Tibial artery (tissue), 4 donors: ENCODE measurements at regions of chr6 and their contacts with region 1.

Region 1: GRCh38 chr6:32763427-32763826 is at the start of gene HLA-DQB2:
- DNase-seq: no peak
- H3K4me3 ChIP-seq: no peak within 1 kb of the TSS
- H3K27ac ChIP-seq: no peak within 1 kb of the TSS
- H3K4me1 ChIP-seq: no peaks in the 10 kb centered on the region
- H3K27me3 ChIP-seq: peaks cover 0 to 25% of the 10 kb centered on the region in 2 donors
- CTCF ChIP-seq: no peak

Region 2: DNA sequence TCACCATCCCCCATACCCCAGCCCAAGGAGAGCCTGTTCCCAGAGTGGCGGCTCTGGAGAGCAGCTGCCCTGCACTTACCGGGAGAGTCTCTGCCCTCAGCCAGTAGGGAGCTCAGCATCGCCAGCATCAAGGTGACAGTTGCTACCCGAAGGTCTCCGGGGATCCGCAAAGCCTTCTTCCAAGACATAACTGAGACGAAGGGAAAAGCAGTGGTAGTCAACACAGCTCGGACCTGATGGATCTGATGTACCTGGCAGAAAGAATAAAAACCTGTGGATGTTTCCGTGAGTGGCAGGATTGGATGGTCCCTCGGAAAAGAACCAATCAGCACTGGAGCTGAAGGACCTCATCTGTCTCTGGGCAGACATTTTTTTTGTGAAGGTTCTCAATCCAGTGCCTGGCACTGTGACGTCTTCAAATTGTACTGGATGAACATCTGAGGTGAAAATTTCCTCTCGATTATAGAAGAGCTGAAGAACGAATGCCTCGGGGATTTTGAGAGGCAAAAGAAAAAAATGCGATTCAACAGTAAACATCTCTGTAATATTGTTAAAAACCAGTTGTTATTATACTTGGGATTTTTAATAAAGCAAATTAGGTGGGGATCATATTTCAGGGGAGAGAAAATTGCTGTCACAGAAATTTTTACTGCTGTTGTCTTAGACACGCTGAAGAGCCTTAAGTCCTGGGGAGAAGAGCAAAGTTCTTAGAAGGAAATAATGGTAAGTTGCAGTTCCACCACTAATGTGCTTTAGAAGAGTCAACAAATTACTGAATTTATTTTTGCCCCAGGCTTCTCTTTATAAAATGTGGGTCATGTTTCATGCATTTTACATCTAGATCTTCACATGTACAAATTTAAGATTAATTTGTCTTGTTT is 96.8 kb before region 1 on chr6 and contains the start of gene HLA-DQB1:
- intact Hi-C with region 1: loop called (anchors 5 kb)
- DNase-seq: peak in 1 of 2 donors; percentile 30
- H3K4me3 ChIP-seq: no peak within 1 kb of the TSS
- H3K27ac ChIP-seq: no peak within 1 kb of the TSS
- H3K4me1 ChIP-seq: no peaks in the 10 kb centered on the region
- H3K27me3 ChIP-seq: no peaks in the 10 kb centered on the region
- CTCF ChIP-seq: no peak

Region 3: DNA sequence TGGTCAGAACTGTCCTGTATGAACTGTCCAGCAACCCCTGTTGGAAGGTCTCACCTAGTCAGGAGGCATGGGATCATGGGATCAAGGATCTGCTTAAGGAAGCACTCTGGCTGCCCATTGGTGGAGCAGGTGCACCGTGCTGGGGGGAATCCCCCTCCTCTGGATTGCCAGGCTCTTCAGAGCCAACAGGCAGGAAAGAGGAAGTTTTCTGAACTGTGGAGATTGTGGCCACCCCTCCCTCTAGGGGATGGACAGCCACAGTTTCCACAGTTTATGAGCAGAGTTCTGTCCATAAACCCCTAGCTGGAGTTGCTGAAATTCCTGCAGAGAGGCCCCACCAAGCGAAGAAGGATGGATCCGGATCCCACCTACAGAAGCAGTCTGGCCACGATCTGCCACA is 83.9 kb before region 1 on chr6:
- intact Hi-C with region 1: no loop called
- DNase-seq: no peak
- H3K4me3 ChIP-seq: no peak overlapping the region
- H3K27ac ChIP-seq: no peak overlapping the region
- H3K4me1 ChIP-seq: no peaks in the 10 kb centered on the region
- H3K27me3 ChIP-seq: no peaks in the 10 kb centered on the region
- CTCF ChIP-seq: no peak

Region 4: GRCh38 chr6:32816746-32817204 is 53.3 kb after region 1 on chr6 and contains the start of gene HLA-DOB:
- intact Hi-C with region 1: no loop called
- DNase-seq: no peak
- H3K4me3 ChIP-seq: no peak within 1 kb of the TSS
- H3K27ac ChIP-seq: no peak within 1 kb of the TSS
- H3K4me1 ChIP-seq: peaks cover 0 to 4% (median 0%) of the 10 kb centered on the region in 4 donors
- H3K27me3 ChIP-seq: peaks cover 0 to 2% of the 10 kb centered on the region in 2 donors
- CTCF ChIP-seq: no peak